ENCODE measurements at regions of chr4 and their contacts with region 1.

Region 1: GRCh38 chr4:1014291-1015167 is 3.1 kb downstream of the FGFRL1 start:
- DNase-seq: peak; percentile 63 to 94 (median 84)

Region 2: DNA sequence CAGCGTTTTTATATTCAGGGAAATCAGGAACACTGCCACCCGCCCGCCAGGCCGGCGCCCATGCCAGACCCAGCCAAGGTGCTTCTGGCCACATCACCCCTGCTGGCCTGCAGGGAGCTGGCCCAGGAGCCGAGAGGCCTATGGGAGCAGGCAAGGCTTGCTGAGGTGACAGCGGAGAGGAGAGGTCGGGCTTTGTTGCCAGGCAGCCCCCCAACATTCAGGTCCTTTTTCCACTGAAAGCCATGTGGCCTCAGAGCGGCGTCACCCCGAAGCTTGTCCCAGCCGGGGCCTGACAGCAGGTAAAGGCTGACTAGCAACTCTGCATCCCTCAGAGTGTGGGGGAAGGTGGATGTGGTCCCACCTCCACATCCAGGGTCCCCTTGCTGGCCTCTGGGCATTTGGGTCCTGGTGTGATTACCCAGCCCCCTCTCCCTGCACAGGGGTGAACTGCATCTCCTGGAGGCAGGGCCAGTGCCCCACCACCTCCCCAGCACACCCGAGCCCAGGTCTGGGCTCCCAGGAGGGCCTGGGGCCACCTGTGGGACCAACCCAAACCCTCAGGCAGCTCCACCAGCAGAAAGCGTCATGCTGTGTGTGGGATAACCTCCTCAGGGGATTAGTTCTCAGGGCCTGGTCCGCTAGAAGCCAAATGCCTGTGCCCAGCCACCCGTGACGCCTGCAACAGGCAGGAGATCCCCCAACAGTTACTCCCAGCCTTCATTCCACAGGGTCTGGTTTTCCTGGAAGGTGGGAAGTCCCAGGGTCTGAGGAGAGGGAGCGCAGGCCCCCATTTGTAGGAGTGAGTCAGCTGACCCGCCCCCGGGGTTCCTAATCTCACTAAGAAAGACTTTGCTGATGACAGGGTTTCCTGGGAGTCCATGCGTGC is 389.6 kb before region 1 on chr4 and contains the start of gene PDE6B:
- intact Hi-C with region 1: no loop called
- DNase-seq: peak in 2 of 42 donors; percentile 30 to 51

Region 3: DNA sequence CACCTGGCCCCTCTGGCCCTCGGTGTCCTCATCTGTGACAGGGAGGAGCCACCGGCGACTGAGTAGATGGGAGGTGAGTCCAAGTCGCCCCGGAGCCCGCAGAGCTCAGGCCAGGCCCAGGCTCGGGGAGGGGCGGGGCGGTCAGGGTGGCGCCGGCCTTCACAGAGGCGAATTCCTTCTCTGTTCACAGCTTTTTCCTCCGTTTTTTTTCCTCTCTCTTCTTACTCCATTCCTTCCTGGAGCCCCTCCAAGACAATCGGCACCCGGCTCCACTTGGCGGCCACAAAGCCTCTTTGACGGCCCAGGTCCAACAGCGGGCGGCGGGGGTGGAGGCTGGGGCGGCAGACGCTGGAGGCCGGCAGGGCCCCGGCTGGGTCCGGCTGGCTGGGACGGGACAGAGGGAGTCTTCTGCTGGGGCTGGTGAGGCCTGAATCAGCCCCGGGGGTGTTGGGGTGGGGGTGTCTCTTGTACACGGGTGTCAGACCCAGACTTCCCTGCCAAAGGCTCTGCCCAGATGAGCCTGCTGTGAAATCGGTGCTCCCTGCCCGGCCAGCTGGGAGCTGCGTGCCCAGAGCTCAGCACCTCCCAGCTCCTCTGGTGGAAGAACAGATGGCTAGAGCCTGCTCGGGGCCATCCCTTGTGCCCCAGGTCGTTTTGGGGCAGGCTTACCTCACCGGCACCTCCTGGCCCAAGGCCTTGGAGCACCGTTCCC is 19.5 kb after region 1 on chr4:
- intact Hi-C with region 1: loop called (anchors 2 kb)
- DNase-seq: peak; percentile 17 to 85 (median 67)

Region 4: GRCh38 chr4:1183985-1184773 is 169.7 kb after region 1 on chr4:
- intact Hi-C with region 1: no loop called
- DNase-seq: peak in 17 of 42 donors; percentile 0 to 40 (median 8)

Measured in head of caudate nucleus (tissue), 42 donors.